Left ventricle myocardium inferior (tissue), 1 donor: ENCODE measurements at regions of chr1 and their contacts with region 1.

Region 1: GRCh38 chr1:24744911-24745710 is at the start of gene CLIC4:
- DNase-seq: peak; percentile 100
- H3K4me3 ChIP-seq: peak within 1 kb of the TSS; percentile 98
- H3K27ac ChIP-seq: peak within 1 kb of the TSS; percentile 98
- H3K4me1 ChIP-seq: peaks cover 75% of the 10 kb centered on the region
- H3K27me3 ChIP-seq: no peaks in the 10 kb centered on the region
- CTCF ChIP-seq: peak; percentile 55
- total RNA-seq, gene CLIC4: 325 TPM

Region 2: GRCh38 chr1:24150234-24151174 is 594.6 kb before region 1 on chr1:
- intact Hi-C with region 1: no loop called
- DNase-seq: peak; percentile 88
- H3K4me3 ChIP-seq: peak overlapping the region; percentile 28
- H3K27ac ChIP-seq: no peak overlapping the region
- H3K4me1 ChIP-seq: peaks cover 12% of the 10 kb centered on the region
- H3K27me3 ChIP-seq: peaks cover 48% of the 10 kb centered on the region
- CTCF ChIP-seq: peak; percentile 93

Region 3: DNA sequence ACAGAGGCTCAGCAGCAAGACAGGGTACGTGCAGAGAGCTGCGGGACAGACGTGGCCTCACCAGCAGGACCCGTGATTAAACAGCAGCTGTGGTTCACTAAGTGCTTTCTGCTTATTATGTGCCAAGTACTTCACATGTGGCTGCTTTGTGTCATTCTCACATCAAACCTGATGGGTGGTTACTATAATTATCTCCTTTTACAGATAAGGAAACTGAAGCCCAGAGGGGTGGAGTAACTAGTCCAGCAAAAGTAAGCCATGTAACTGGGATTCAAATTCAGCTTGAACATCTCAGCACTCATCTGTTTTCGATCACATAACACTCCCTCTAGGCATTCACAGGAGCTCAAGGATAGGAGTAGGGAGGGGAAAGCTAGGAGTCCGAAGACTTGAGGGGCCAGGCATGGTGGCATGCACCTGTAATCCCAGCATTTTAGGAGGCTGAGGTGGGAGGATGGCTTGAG is 50.7 kb before region 1 on chr1:
- intact Hi-C with region 1: loop called (anchors 10 kb)
- DNase-seq: peak; percentile 71
- H3K4me3 ChIP-seq: peak overlapping the region; percentile 17
- H3K27ac ChIP-seq: peak overlapping the region; percentile 90
- H3K4me1 ChIP-seq: peaks cover 59% of the 10 kb centered on the region
- H3K27me3 ChIP-seq: no peaks in the 10 kb centered on the region
- CTCF ChIP-seq: no peak